IMR-90 (cell line): ENCODE measurements at regions of chr15 and their contacts with region 1.

Region 1: GRCh38 chr15:78618490-78618934 is 2.3 kb downstream of the CHRNA3 start:
- DNase-seq: peak; percentile 81
- ATAC-seq: peak; percentile 90
- H3K4me3 ChIP-seq: no peak overlapping the region
- H3K27ac ChIP-seq: no peak overlapping the region
- H3K4me1 ChIP-seq: no peaks in the 10 kb centered on the region
- H3K27me3 ChIP-seq: peaks cover 39% of the 10 kb centered on the region
- CTCF ChIP-seq: peak; percentile 81
- POLR2A ChIP-seq: no peak
- RAD21 ChIP-seq: peak; percentile 85

Region 2: DNA sequence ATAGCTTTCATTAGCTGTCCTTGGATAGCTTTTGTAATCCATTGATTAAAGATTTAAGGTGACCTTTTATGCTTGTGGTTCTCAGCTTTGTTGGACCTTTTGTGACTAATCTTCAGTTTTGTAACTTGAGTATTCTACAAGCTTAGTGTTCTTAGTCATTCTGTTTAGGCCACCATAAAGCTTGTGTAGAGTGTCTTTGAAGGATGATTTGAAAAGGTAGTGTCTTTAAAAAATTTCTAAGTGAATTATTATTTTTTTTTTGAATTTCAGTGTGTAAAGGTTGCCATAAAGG is 261.7 kb after region 1 on chr15:
- CTCF ChIA-PET with region 1: no interaction called
- POLR2A ChIA-PET with region 1: no interaction called
- dilution Hi-C with region 1: no loop called
- in situ Hi-C with region 1: no loop called
- intact Hi-C with region 1: loop called (anchors 10 kb)
- DNase-seq: peak; percentile 76
- ATAC-seq: peak; percentile 22; the same call in 1 of the 2 replicates
- H3K4me3 ChIP-seq: no peak overlapping the region
- H3K27ac ChIP-seq: peak overlapping the region; percentile 17; the same call in 1 of the 2 replicates
- H3K4me1 ChIP-seq: peaks cover 15% of the 10 kb centered on the region
- H3K27me3 ChIP-seq: no peaks in the 10 kb centered on the region
- CTCF ChIP-seq: no peak
- POLR2A ChIP-seq: no peak
- RAD21 ChIP-seq: no peak

Region 3: DNA sequence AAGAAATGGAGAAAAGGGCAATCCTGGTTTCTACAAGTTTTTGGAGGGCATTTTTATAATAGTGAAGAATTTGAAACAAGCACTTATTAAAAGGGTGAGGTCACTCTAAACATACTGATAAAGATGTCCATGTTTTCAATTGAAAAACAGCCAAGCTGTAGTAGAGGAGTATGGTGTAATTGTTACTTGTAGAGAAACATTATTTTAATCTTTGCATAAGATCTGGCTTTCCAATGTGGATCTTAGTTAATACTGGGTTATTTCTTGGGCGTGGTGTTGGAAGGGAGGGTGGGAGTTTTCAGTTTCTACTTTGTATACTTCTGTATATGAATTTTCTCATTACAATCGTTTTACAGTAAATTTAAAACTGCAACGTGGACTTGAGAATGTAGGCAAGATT is 277.0 kb after region 1 on chr15:
- CTCF ChIA-PET with region 1: no interaction called
- POLR2A ChIA-PET with region 1: no interaction called
- dilution Hi-C with region 1: no loop called
- in situ Hi-C with region 1: no loop called
- intact Hi-C with region 1: no loop called
- DNase-seq: peak; percentile 33
- ATAC-seq: peak; percentile 40; the same call in 1 of the 2 replicates
- H3K4me3 ChIP-seq: no peak overlapping the region
- H3K27ac ChIP-seq: no peak overlapping the region
- H3K4me1 ChIP-seq: peaks cover 3% of the 10 kb centered on the region
- H3K27me3 ChIP-seq: no peaks in the 10 kb centered on the region
- CTCF ChIP-seq: no peak
- POLR2A ChIP-seq: no peak
- RAD21 ChIP-seq: no peak